Psoas muscle (tissue), 8 donors: ENCODE measurements at regions of chr10 and their contacts with region 1.

Region 1: DNA sequence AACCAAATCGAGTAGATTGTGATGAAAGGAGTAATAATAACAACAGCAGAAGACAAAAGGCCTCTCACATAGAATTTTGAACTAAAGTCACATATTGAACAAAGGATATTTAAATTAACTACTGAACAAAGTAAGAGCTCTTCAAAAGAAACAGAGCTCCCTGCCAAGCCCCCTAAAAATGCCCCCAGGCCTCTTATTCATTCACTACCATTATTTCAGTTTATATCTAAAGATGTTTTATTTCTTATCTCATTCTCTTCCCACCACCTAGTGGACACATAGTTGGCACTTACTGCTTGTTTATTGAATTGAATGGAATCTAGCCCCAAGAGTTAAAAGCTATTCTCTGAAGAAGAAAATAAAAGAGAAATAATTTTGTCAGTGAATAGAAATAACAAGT is 37.4 kb downstream of the VCL start:
- DNase-seq: no peak
- ATAC-seq: no peak
- H3K4me3 ChIP-seq: no peak overlapping the region
- H3K27ac ChIP-seq: peak overlapping the region; percentile 83
- H3K4me1 ChIP-seq: peaks cover 84% of the 10 kb centered on the region
- H3K27me3 ChIP-seq: no peaks in the 10 kb centered on the region
- CTCF ChIP-seq: peak; percentile 26

Region 2: GRCh38 chr10:73997787-73998622 is 37.3 kb before region 1 on chr10 and contains the start of gene VCL:
- intact Hi-C with region 1: loop called (anchors 5 kb)
- DNase-seq: peak; percentile 98 to 99
- ATAC-seq: peak; percentile 93 to 96 (median 96)
- H3K4me3 ChIP-seq: peak within 1 kb of the TSS; percentile 95
- H3K27ac ChIP-seq: peak within 1 kb of the TSS; percentile 97
- H3K4me1 ChIP-seq: peaks cover 35% of the 10 kb centered on the region
- H3K27me3 ChIP-seq: no peaks in the 10 kb centered on the region
- CTCF ChIP-seq: no peak
- total RNA-seq, gene VCL: 89.1 to 426 (median 179) TPM

Region 3: DNA sequence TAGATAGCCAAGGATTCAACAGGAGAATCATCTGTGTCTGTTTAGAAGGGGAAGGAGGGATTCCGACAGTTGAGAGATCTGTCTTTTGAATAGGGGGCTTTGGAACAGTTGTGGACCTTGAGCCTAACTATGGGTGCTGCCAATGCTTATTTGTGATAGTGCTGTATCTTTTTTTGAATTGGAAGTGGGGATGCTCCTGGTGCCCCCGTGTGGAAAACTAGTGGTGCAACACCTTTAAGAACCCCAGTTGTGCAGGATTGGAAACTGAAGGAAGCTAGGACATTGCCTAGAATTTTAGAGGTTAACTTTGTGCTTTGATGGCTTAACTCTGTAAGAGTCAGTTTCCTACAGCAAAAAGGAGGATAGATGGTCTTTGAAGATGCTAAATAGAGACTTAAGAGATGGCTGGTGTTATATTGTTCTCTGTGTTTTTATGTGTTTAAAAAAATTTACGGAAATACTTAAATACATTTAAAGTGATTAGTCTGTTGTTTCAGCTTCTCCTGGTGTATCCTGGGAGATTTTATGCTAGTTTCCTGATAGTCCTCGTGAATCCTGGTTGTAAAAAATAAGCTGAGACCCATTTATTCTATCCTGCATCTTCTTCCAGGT is 46.0 kb after region 1 on chr10:
- intact Hi-C with region 1: no loop called
- DNase-seq: no peak
- ATAC-seq: peak; percentile 51 to 62 (median 56)
- H3K4me3 ChIP-seq: no peak overlapping the region
- H3K27ac ChIP-seq: peak overlapping the region; percentile 52
- H3K4me1 ChIP-seq: peaks cover 32% of the 10 kb centered on the region
- H3K27me3 ChIP-seq: no peaks in the 10 kb centered on the region
- CTCF ChIP-seq: peak; percentile 74